ENCODE measurements at regions of chr16 and their contacts with region 1.

Region 1: GRCh38 chr16:73058221-73058615 is 10.3 kb upstream of the ZFHX3 start:
- H3K4me3 Mint-ChIP-seq: peak overlapping the region; percentile 90
- H3K27ac Mint-ChIP-seq: peak overlapping the region; percentile 92
- H3K4me1 Mint-ChIP-seq: peaks cover 57% of the 10 kb centered on the region
- H3K27me3 Mint-ChIP-seq: peaks cover 40% of the 10 kb centered on the region

Region 2: GRCh38 chr16:72764015-72764654 is 294.1 kb before region 1 on chr16:
- intact Hi-C with region 1: no loop called
- H3K4me3 Mint-ChIP-seq: no peak overlapping the region
- H3K27ac Mint-ChIP-seq: no peak overlapping the region
- H3K4me1 Mint-ChIP-seq: peaks cover 10% of the 10 kb centered on the region
- H3K27me3 Mint-ChIP-seq: no peaks in the 10 kb centered on the region

Region 3: DNA sequence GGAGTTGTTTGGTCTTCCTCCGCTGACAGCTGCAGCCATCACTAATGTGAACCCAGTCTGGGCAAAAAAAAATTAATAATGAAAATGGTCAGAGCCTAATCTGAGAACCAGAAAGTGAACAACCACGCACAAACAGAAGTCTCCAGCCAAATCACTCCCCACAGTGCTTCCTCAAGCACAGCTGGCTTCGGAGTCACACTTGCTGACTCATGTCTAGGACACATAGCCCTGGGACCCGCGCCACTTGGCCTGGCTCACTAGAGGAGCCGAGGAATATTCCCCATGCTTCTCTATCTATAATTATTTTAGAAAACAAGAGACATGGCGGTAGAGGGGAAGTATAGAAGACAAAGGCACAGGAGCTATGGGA is 119.4 kb before region 1 on chr16:
- intact Hi-C with region 1: loop called (anchors 10 kb)
- H3K4me3 Mint-ChIP-seq: no peak overlapping the region
- H3K27ac Mint-ChIP-seq: peak overlapping the region; percentile 71
- H3K4me1 Mint-ChIP-seq: peaks cover 54% of the 10 kb centered on the region
- H3K27me3 Mint-ChIP-seq: peaks cover 3% of the 10 kb centered on the region